Posterior cingulate gyrus (tissue), 11 donors: ENCODE measurements at regions of chr5 and their contacts with region 1.

Region 1: DNA sequence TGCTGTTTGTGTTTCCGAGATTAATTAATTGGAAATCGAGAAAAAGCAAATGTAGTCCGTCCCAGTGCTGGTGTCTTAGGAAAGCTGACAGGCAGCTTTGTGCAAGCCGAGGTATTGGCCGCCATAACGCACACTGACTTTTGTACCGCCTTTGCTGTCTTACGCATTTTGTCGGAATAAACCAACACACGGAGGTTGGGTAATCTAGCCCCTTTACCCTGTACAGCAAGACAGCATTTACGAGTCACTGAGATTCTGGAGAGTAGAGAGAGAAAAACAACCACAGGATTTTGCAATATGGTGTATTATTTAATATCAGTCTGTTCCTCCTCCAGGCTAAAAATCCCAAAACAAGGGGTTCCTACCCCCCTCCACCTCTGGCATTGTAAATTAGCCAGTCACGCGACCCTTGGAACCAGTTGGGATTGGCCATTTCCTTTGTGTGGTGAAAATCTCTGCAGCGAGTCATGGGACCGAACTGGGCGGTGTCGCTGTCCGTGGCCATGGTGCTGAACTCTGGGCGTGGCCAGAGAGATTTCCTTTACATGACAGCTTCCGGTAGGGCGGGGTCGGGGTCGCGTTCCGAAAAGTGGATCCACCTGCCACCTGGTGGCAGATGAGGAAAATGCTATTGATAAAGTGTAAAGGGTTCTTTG is 10.3 kb upstream of the PCDHB1 start:
- DNase-seq: peak; percentile 94 to 99 (median 96)

Region 2: GRCh38 chr5:140868721-140869554 is 172.0 kb before region 1 on chr5 and contains the start of gene PCDHA11:
- intact Hi-C with region 1: loop called (anchors 2 kb)
- DNase-seq: peak in 2 of 10 donors; percentile 5 to 75

Region 3: DNA sequence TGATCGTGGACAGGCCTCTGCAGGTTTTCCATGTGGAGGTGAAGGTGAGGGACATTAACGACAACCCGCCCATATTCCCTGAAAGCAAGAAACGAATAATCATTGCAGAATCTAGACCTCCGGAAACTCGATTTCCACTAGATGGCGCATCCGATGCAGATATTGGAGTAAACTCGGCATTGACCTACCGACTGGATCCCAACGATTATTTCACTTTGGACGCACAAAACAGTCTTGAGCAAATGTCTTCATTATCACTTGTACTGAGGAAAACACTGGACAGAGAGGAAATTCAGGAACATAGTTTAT is 158.4 kb before region 1 on chr5:
- intact Hi-C with region 1: loop called (anchors 1 kb)
- DNase-seq: peak in 3 of 10 donors; percentile 6 to 55 (median 53)

Region 4: DNA sequence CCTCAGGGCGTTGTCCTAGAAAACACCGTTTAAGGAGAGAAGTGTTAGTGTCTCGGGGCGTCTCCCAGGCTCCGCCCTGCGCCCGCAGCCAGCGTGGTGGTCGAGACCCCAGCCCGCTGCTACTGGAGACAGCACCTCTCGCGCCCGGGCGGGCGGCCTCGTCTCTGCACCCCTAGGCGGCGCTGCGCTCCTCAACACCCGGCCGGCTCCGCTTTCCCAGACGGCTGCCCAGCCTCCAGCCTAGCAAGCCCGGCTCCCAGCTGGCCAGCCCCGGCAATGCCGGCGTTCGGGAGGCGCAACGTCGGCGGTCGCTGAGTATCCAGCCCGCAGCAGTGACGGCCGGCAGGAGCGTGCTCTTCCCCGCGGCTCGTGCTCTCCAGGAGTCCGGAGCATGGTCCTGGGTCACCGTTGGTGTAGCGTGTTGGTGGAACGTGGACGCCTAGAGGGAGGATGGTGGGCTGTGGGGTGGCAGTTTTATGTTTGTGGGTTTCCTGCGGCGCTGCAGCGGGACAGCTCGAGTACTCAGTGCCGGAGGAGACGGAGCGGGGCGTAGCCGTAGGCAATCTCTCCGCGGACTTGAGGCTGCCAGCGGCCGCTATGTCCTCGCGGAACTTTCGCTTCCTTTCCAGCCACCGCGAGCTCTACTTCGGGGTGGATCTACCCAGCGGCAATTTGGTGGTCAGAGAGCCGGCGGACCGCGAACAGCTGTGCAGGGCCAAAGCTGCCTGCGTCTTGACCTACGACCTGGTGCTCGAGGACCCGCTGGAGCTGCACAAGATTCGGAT is 114.3 kb before region 1 on chr5:
- intact Hi-C with region 1: loop called (anchors 1 kb)
- DNase-seq: peak; percentile 67 to 97 (median 84)

Region 5: DNA sequence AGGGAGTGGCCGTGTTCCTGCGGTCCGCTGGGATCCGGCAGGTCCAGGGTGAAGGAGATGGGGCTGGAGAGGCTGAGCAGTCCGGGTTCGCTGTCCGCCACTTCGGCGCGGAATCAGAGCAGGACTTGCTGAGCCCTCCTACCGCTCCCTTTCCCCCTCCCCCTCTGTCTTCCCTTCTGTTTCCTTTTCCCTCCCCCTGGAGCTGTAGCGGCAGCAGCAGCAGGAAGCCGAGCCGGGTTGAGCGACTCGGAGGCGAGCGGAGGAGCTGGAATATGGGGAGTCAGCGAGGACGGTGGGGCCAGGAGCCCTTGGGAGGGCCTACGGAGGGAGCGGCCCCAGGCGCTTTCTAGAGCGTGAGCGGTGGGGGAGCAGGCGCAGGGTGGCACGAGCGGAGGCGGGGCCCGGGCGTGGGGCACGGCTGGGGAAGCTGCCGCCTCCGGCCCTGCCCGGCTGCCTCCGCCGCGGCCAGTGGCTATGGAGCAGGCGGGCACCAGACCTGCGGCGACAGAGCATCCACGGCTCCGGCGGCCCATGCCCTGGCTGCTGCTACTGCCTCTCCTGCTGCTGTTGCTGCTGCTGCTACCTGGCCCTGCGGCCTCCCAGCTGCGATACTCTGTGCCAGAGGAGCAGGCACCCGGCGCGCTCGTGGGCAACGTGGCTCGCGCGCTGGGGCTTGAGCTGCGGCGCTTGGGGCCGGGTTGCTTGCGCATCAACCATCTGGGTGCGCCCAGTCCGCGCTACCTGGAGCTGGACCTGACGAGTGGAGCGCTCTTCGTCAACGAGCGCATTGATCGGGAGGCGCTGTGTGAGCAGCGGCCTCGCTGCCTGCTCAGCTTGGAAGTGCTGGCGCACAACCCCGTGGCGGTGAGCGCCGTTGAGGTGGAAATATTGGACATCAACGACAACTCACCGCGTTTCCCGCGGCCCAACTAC is 74.3 kb before region 1 on chr5 and contains the start of gene PCDHAC2:
- intact Hi-C with region 1: loop called (anchors 5 kb)
- DNase-seq: peak; percentile 55 to 95 (median 70)

Region 6: DNA sequence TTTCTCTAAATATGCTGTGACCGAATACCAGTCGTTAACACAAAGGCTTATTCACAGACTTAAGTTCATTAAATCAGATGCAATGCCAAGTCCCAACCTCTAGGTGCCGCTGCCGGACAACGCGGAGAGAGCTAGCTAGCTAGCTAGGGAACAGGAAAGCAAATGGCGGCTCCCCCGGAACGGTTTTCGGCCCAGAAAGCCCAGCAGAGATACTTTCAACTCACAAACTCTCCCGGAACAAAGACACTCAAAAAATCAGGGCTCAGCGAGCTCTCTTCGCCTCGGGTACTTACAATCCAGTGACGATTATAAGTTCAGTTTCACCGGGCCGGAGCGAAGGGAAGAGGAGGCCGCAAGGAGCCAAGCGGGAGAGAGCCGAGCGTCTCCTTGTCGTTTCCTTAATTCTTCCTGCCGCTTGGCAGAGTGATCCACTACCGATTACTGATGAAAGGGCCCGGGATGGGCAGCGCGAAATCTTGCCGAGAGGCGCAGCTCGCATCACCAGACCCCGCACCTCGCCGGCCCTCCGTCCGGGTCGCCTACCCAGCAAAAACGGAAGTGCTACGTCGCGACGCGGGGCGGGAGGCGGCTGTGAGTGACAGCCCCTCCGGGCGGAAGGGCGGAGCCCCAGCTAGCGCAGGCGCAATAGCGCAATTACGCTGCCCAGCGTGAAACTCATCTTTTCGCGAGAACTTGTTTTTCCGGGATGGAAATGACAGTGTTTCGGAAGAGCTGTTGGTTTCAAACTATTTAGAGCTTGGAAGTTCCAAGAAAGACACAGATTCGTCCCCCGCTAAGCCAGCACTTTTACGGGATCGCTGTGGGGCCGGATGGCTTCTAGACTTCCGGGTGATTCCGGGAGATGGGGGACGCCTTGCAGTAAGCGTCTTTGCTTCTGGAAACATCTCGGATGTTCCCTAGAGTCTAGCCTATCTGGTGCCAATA is 279.6 kb after region 1 on chr5 and contains the start of gene TAF7:
- intact Hi-C with region 1: no loop called
- DNase-seq: peak; percentile 83 to 98 (median 88)